Transverse colon (tissue), 4 donors: ENCODE measurements at regions of chr18 and their contacts with region 1.

Region 1: GRCh38 chr18:7221424-7222155 is 9.3 kb upstream of the LRRC30 start:
- DNase-seq: peak; percentile 9
- H3K4me3 ChIP-seq: no peak overlapping the region
- H3K27ac ChIP-seq: no peak overlapping the region
- H3K4me1 ChIP-seq: no peaks in the 10 kb centered on the region
- H3K27me3 ChIP-seq: no peaks in the 10 kb centered on the region
- CTCF ChIP-seq: peak in 4 of 5 experiments; percentile 22 to 48 (median 38)
- EP300 ChIP-seq: no peak
- POLR2A ChIP-seq: no peak

Region 2: GRCh38 chr18:7317804-7318231 is 96.2 kb after region 1 on chr18:
- in situ Hi-C with region 1: loop called in 1 of 4 experiments (anchors 25 kb)
- intact Hi-C with region 1: no loop called
- DNase-seq: no peak
- H3K4me3 ChIP-seq: no peak overlapping the region
- H3K27ac ChIP-seq: no peak overlapping the region
- H3K4me1 ChIP-seq: no peaks in the 10 kb centered on the region
- H3K27me3 ChIP-seq: no peaks in the 10 kb centered on the region
- CTCF ChIP-seq: no peak
- EP300 ChIP-seq: no peak
- POLR2A ChIP-seq: no peak